Dendritic cell treated with granulocyte-macrophage colony-stimulating factor and Interleukin-4, amounts not matched to agents 40 ng/mL and 50 ng/mL, for 4 days (primary cell): ENCODE measurements at regions of chr5 and their contacts with region 1.

Region 1: GRCh38 chr5:171342362-171343111 is 33.5 kb downstream of the TLX3 start:
- H3K4me3 Mint-ChIP-seq: no peak overlapping the region
- H3K27ac Mint-ChIP-seq: no peak overlapping the region
- H3K4me1 Mint-ChIP-seq: no peaks in the 10 kb centered on the region
- H3K27me3 Mint-ChIP-seq: peaks cover 24% of the 10 kb centered on the region

Region 2: GRCh38 chr5:170638454-170639220 is 703.9 kb before region 1 on chr5:
- intact Hi-C with region 1: loop called (anchors 5 kb)
- H3K4me3 Mint-ChIP-seq: no peak overlapping the region
- H3K27ac Mint-ChIP-seq: no peak overlapping the region
- H3K4me1 Mint-ChIP-seq: peaks cover 12% of the 10 kb centered on the region
- H3K27me3 Mint-ChIP-seq: peaks cover 26% of the 10 kb centered on the region

Region 3: GRCh38 chr5:170747851-170748250 is 594.7 kb before region 1 on chr5:
- intact Hi-C with region 1: loop called (anchors 5 kb)
- H3K4me3 Mint-ChIP-seq: no peak overlapping the region
- H3K27ac Mint-ChIP-seq: no peak overlapping the region
- H3K4me1 Mint-ChIP-seq: peaks cover 4% of the 10 kb centered on the region
- H3K27me3 Mint-ChIP-seq: peaks cover 55% of the 10 kb centered on the region

Region 4: GRCh38 chr5:170986598-170986997 is 355.9 kb before region 1 on chr5:
- intact Hi-C with region 1: loop called (anchors 10 kb)
- H3K4me3 Mint-ChIP-seq: no peak overlapping the region
- H3K27ac Mint-ChIP-seq: no peak overlapping the region
- H3K4me1 Mint-ChIP-seq: no peaks in the 10 kb centered on the region
- H3K27me3 Mint-ChIP-seq: no peaks in the 10 kb centered on the region

Region 5: DNA sequence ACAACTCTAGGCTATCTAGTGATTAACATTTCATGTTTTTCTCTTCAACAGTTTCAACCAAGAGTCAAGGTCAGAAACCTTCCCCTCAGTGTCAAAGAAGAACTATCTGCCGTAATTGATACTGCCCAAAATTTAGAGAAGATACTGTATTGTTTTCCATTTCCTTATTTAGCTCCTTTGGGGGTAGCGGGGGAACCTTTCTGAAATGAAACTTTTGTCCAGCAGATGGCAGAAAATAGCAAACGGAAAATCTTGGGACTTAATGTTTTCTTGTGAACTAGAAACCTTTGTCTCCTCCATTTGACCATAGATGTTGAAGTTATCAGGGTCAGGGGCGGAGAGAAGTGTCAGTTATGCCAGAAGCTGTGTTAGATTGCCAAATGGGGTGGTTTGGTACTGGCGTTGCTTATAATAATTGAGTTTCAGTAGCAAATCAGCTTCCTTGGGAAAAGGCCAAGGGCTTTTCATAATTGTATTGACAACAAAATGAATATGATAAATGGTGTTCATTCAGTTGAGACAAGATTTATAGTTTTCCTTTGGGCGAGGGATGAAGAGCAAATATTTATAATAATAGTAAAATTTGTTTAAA is 135.2 kb before region 1 on chr5:
- intact Hi-C with region 1: loop called (anchors 1 kb)
- H3K4me3 Mint-ChIP-seq: no peak overlapping the region
- H3K27ac Mint-ChIP-seq: no peak overlapping the region
- H3K4me1 Mint-ChIP-seq: no peaks in the 10 kb centered on the region
- H3K27me3 Mint-ChIP-seq: no peaks in the 10 kb centered on the region

Region 6: GRCh38 chr5:171272996-171273970 is 69.3 kb before region 1 on chr5:
- intact Hi-C with region 1: loop called (anchors 1 kb)
- H3K4me3 Mint-ChIP-seq: no peak overlapping the region
- H3K27ac Mint-ChIP-seq: no peak overlapping the region
- H3K4me1 Mint-ChIP-seq: no peaks in the 10 kb centered on the region
- H3K27me3 Mint-ChIP-seq: no peaks in the 10 kb centered on the region

Region 7: DNA sequence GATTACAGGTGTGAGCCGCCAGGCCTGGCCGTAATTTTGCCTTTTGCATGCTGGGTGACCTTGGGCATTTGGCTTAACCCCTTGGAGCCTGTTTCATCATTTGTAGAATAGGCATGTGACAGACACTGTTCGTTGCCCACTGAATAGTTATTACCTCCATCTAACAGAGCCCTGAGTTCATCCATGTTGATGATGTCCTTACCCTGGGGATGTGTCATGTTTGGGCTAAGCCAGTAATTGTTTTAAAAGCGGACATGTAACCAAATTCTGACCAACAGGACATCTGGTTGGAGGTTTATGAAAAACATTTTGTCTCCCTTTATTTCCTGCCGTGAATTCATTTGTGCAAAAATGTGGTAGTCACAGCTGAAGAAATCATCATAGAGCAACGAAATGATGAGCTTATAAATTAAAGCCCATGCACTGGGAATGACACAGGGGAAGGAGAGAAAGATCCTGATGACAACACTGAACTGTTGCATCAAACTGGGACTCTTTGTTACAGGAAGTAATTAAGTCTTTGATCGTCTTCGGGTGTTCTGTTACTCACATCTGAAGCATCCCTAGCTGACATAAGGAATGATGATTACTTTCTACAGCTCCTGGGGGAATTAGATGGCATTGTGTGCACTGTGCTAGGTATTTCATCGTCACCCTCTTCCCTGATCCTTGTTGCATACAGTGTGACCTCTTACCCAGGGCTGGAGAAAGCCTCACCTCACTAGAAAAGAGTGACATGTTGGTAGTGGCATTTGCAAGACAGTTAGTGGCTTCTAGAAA is 194.7 kb after region 1 on chr5:
- intact Hi-C with region 1: no loop called
- H3K4me3 Mint-ChIP-seq: no peak overlapping the region
- H3K27ac Mint-ChIP-seq: no peak overlapping the region
- H3K4me1 Mint-ChIP-seq: no peaks in the 10 kb centered on the region
- H3K27me3 Mint-ChIP-seq: peaks cover 8% of the 10 kb centered on the region